Activated CD8-positive, alpha-beta T cell treated with anti-CD3 and anti-CD28 coated beads, Interleukin-2, amount 10 ng/mL, durations not matched to agents 7 days and 5 days (primary cell): ENCODE measurements at regions of chr3 and their contacts with region 1.

Region 1: GRCh38 chr3:186930641-186931531 is 560 bp downstream of the ST6GAL1 start:
- DNase-seq: peak; percentile 78
- ATAC-seq: peak; percentile 80
- H3K4me3 Mint-ChIP-seq: peak overlapping the region; percentile 99
- H3K27ac Mint-ChIP-seq: peak overlapping the region; percentile 87
- H3K4me1 Mint-ChIP-seq: peaks cover 28% of the 10 kb centered on the region
- H3K27me3 Mint-ChIP-seq: no peaks in the 10 kb centered on the region

Region 2: GRCh38 chr3:186882881-186883685 is 47.8 kb before region 1 on chr3:
- CTCF ChIA-PET with region 1: interaction called, 20 read pairs
- POLR2A ChIA-PET with region 1: interaction called, 9 read pairs
- DNase-seq: peak; percentile 24
- ATAC-seq: peak; percentile 62
- H3K4me3 Mint-ChIP-seq: no peak overlapping the region
- H3K27ac Mint-ChIP-seq: peak overlapping the region; percentile 5
- H3K4me1 Mint-ChIP-seq: peaks cover 43% of the 10 kb centered on the region
- H3K27me3 Mint-ChIP-seq: no peaks in the 10 kb centered on the region

Region 3: DNA sequence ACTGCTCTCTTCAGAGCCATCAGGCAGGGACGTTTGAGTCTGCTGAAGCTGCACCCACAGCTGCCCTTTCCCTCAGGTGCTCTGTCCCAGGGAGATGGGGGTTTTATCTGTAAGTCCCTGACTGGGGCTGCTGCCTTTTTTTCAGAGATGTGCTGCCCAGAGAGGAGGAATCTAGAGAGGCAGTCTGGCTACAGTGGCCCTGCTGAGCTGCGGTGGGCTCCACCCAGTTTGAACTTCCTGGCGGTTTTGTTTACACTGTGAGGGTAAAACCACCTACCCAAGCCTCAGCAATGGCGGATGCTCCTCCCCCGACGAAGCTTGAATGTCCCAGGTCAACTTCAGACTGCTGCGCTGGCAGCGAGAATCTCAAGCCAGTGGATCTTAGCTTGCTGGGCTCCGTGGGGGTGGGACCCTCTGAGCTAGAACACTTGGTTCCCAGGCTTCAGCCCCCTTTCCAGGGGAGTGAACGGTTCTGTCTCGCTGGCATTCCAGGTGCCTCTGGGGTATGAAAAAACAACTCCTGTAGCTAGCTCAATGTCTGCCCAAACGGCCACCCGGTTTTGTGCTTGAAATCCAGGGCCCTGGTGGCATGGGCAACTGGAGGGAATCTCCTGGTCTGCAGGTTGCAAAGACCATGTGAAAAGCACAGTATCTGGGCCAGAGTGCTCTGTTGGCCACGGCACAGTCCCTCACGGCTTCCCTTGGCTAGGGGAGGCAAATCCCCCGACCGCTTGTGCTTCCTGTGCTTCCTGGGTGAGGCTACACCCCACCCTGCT is 21.6 kb before region 1 on chr3:
- CTCF ChIA-PET with region 1: interaction called, 19 read pairs
- POLR2A ChIA-PET with region 1: interaction called, 34 read pairs
- DNase-seq: peak; percentile 93
- ATAC-seq: peak; percentile 92
- H3K4me3 Mint-ChIP-seq: peak overlapping the region; percentile 60
- H3K27ac Mint-ChIP-seq: peak overlapping the region; percentile 96
- H3K4me1 Mint-ChIP-seq: peaks cover 47% of the 10 kb centered on the region
- H3K27me3 Mint-ChIP-seq: no peaks in the 10 kb centered on the region

Region 4: GRCh38 chr3:186917512-186918312 is 13.2 kb before region 1 on chr3:
- CTCF ChIA-PET with region 1: interaction called, 10 read pairs
- POLR2A ChIA-PET with region 1: interaction called, 6 read pairs
- DNase-seq: no peak
- ATAC-seq: peak; percentile 21
- H3K4me3 Mint-ChIP-seq: no peak overlapping the region
- H3K27ac Mint-ChIP-seq: peak overlapping the region; percentile 27
- H3K4me1 Mint-ChIP-seq: peaks cover 60% of the 10 kb centered on the region
- H3K27me3 Mint-ChIP-seq: no peaks in the 10 kb centered on the region

Region 5: DNA sequence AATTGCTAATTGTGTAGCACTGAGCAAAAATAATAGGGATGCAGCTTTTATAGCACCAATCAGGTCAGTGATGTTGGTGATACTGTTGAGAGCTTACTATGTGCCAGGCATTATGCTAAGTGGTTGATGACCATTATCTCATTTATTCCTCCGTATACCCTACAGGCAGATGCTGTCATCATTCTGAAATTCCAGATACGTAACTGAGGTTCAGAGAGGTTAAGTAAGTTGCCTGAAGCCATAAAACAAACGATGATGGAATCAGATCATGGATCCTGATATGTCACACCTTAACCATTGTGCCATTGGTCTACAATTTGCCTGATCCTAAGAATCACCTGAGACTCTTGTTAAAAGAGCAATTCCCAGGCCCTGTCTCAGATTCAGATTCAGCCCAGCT is 49.0 kb after region 1 on chr3:
- CTCF ChIA-PET with region 1: no interaction called
- POLR2A ChIA-PET with region 1: no interaction called
- DNase-seq: no peak
- ATAC-seq: no peak
- H3K4me3 Mint-ChIP-seq: no peak overlapping the region
- H3K27ac Mint-ChIP-seq: no peak overlapping the region
- H3K4me1 Mint-ChIP-seq: no peaks in the 10 kb centered on the region
- H3K27me3 Mint-ChIP-seq: no peaks in the 10 kb centered on the region